Tibial artery (tissue), 4 donors: ENCODE measurements at regions of chr14 and their contacts with region 1.

Region 1: DNA sequence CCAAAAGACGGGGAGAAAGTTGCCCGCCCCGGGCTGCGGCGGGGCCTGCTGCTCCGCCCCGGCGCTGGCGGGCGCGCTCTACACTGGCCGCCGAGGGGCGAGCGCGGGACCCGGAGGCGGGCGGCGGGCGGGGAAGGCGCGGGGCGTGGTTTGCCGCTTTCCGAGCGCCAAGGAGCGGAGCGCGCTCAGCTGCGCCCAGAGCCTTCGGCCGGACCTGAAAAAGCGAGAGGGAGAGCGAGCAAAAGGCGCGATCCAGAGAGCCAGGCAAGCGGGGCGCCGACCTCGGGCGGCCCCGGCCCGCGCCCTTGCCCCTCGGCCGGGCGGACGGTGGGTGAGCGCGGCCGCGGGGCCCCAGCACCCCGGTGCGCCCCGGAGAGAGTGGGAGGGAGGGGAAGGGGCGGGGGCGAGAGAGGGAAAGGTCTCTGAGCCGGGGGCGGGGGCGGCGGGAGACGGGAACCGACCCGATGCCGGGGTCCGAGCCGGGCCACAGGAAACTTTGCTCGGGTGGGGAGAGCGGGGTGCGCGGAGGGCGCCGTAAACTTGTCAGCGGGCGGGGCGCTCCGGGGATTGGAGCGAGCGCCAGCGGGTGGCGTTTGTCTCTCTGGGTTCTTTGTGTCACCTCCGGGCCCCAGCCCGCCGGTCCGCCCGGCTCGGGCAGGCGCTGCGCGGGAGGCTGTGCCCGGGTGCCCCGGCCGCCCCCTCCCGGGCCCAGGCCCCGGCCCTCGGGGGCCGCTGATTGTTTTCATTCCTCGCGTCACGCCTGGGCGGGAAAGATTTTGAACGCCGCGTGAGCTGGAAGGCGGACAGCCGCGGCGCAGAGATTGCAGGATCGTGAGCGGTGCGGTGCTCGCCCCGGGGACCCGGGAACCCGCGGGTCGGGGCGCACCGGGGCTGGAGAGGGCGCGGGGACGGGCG is at the start of gene SYNE2:
- DNase-seq: peak; percentile 66 to 88
- H3K4me3 ChIP-seq: peak within 1 kb of the TSS; percentile 83 to 99
- H3K27ac ChIP-seq: peak within 1 kb of the TSS; percentile 82 to 98
- H3K4me1 ChIP-seq: peaks cover 0 to 28% (median 6%) of the 10 kb centered on the region in 4 donors
- H3K27me3 ChIP-seq: no peaks in the 10 kb centered on the region
- CTCF ChIP-seq: peak; percentile 18 to 40

Region 2: GRCh38 chr14:63901434-63902085 is 48.5 kb after region 1 on chr14:
- intact Hi-C with region 1: loop called (anchors 10 kb)
- DNase-seq: peak in 1 of 2 donors; percentile 28
- H3K4me3 ChIP-seq: no peak overlapping the region
- H3K27ac ChIP-seq: no peak overlapping the region
- H3K4me1 ChIP-seq: peaks cover 0 to 22% (median 18%) of the 10 kb centered on the region in 4 donors
- H3K27me3 ChIP-seq: no peaks in the 10 kb centered on the region
- CTCF ChIP-seq: no peak